Tibial artery (tissue), 4 donors: ENCODE measurements at regions of chr14 and their contacts with region 1.

Region 1: DNA sequence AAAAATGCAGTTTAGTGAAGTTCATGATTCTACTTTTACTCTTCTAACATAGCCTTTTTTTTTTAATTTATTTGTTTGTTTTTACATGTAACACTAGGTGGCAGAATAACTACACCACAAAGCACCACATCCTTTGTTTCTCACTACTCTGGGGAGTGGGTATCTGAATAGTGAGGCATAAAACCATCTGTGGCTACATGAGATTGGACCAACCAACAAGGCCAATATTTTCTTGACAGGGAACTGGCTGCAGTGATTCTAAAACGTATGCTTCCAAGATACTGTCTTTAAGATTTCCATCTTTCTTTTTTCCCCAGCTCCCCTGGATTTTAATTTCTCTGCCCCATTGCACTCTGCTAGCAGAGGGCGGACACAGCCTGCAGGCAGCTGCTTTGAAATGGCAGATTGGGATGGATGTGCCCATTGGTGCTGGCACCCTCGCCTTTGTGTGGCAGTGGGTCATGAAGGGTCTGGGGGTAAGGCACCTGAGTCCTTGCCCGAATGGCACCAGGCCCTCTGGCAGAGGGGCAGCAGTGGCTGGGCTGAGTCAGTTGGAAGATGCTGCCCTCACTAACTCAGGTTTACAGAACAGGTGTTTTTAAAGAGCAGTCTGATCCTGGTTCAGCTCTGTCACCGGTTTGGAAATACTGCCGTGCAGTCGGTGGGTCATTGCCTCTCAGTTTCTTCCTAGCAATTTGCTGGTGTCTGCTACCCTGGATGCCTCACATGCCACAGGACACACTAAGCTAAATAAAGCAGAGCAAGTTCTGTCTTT is 429.1 kb downstream of the RAD51B start:
- DNase-seq: peak in 1 of 2 donors; percentile 69
- H3K4me3 ChIP-seq: no peak overlapping the region
- H3K27ac ChIP-seq: peak overlapping the region; percentile 87 to 89
- H3K4me1 ChIP-seq: peaks cover 0 to 82% (median 68%) of the 10 kb centered on the region in 4 donors
- H3K27me3 ChIP-seq: no peaks in the 10 kb centered on the region
- CTCF ChIP-seq: peak; percentile 49 to 62

Region 2: DNA sequence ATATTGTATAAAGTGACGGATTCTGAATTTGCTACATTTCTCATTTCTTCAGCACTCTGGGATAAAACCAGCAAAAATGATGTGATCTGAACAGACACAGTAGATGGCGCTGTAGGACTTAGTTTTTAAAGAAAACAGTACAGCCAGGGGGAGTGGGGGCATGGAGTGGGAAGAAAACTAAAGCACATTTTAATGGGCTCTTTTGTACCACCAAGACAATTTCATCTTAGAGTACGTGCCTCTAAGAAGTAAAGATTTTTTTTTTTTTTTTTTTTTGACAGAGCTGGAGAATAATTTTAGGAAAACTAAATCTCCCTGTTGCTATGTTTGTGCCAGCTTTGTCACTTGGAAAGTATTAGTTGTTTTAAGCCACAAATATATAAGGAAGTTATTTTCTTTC is 304.7 kb before region 1 on chr14:
- intact Hi-C with region 1: loop called (anchors 5 kb)
- DNase-seq: peak; percentile 78 to 79
- H3K4me3 ChIP-seq: no peak overlapping the region
- H3K27ac ChIP-seq: peak overlapping the region; percentile 75 to 80
- H3K4me1 ChIP-seq: peaks cover 8 to 51% (median 31%) of the 10 kb centered on the region in 4 donors
- H3K27me3 ChIP-seq: no peaks in the 10 kb centered on the region
- CTCF ChIP-seq: peak; percentile 69 to 94

Region 3: DNA sequence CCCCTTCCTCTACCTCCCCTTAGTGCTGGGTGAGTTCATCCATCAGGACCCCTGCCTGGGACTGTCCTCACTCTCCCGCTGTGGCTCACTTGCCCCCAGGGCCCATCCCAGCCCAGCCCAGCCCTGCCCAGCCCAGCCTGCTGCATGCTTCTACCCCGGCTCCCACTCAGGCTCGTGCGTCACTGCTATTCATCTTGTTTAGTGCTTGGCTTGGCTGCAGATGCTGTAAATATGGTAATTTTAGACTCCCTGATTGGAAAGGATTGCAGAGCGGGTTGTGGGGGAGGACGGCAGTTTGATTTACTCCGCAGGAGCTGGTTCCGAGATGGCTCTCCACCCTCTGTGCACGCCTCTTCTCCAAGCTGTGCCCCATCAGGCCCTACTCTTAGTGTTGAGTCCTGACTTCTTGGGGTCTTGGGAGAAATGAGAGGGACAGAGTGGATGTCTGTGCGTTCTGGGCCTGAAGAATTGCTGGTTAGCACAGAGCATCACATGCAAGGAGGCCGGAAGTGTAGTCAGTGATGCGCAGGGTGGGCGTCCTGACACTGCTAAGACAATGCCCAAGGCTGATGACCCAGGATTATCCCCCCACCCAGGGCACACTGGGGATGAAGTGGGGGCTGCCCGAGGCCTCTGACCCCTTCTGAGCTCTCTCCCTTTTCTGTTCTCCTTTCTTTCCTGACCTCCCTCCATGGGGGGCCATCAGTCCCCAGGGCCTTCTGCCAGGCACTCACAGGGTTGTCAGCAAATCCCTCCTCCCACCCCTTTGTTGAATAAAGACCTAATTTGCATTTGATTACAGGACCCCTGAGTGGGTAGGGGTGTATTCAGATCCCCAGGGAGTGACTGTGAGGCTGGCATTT is 299.8 kb after region 1 on chr14:
- intact Hi-C with region 1: loop called (anchors 10 kb)
- DNase-seq: peak; percentile 93 to 97
- H3K4me3 ChIP-seq: peak overlapping the region in 1 of 2 donors; percentile 15
- H3K27ac ChIP-seq: peak overlapping the region; percentile 94 to 96
- H3K4me1 ChIP-seq: peaks cover 0 to 96% (median 75%) of the 10 kb centered on the region in 4 donors
- H3K27me3 ChIP-seq: no peaks in the 10 kb centered on the region
- CTCF ChIP-seq: no peak

Region 4: DNA sequence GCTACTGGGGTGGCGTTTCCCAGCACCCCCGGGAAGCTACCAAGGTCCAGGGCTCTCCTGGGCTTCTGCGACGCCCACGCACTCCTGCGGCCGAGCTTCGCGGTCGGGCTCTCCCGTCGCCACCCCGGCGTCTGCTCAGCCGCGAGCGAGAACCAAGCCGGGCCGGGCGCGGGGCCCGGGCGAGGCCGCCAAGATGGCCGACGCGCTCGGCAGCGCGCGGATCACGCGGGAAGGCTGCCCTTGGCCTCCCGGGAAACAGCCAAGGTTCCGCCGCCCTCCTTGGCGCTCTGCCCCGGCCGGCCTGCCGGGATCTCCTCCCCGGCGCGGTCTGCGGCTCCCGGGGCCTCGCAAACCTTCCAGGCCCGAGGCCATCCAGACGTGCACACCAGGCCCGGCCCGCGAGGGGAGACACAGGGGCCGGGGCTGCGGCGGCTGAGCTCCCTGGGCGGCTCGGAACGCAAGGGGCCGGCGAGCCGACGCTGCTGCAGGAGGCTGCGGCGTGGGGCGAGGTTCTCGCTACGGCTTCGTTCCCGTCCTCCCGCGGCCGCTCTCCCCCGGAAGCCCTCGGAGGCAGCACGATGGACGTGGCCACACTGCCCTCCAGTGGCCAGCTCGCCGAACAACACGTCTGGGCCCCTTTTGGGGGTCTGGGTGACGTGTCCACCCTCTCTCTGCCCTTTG is 567.7 kb after region 1 on chr14:
- intact Hi-C with region 1: loop called (anchors 10 kb)
- DNase-seq: peak; percentile 89 to 94
- H3K4me3 ChIP-seq: peak overlapping the region; percentile 51 to 68
- H3K27ac ChIP-seq: peak overlapping the region; percentile 88 to 98
- H3K4me1 ChIP-seq: peaks cover 6 to 49% (median 43%) of the 10 kb centered on the region in 4 donors
- H3K27me3 ChIP-seq: no peaks in the 10 kb centered on the region
- CTCF ChIP-seq: peak; percentile 96 to 99